GM10248 (cell line): ENCODE measurements at regions of chr2 and their contacts with region 1.

Region 1: GRCh38 chr2:230160112-230160660 is 59.6 kb downstream of the SP110 start:
- DNase-seq: peak; percentile 77
- CTCF ChIP-seq: peak; percentile 64

Region 2: GRCh38 chr2:230007931-230008707 is 152.1 kb before region 1 on chr2:
- CTCF ChIA-PET with region 1: interaction called, 36 read pairs
- POLR2A ChIA-PET with region 1: no interaction called
- DNase-seq: peak; percentile 63
- CTCF ChIP-seq: peak; percentile 78

Region 3: GRCh38 chr2:230128623-230129342 is 31.4 kb before region 1 on chr2:
- CTCF ChIA-PET with region 1: interaction called, 10 read pairs
- POLR2A ChIA-PET with region 1: no interaction called
- DNase-seq: no peak
- CTCF ChIP-seq: no peak

Region 4: GRCh38 chr2:230170532-230170931 is 10.3 kb after region 1 on chr2:
- CTCF ChIA-PET with region 1: interaction called, 61 read pairs
- POLR2A ChIA-PET with region 1: no interaction called
- DNase-seq: no peak
- CTCF ChIP-seq: no peak

Region 5: DNA sequence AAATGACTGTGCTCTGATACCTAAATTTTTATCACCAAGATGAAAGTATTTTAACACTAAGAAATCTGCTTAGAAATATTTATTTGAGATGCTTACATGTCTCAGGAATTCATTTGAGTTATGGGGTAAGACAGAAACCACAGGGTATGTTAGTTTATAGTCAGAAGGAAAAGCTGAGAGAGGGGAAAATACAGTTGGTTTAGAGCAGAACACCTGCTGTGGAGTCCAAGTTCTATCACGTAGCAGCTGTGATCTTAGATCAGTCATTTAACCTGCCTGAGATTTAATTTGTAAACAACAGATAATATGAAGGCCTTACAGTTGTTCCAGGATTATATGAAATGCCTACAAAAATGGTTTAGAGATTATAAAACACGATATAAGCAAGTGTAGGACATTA is 1591.9 kb after region 1 on chr2:
- CTCF ChIA-PET with region 1: no interaction called
- POLR2A ChIA-PET with region 1: no interaction called
- DNase-seq: no peak
- CTCF ChIP-seq: no peak